ENCODE measurements at regions of chr6 and their contacts with region 1.

Region 1: GRCh38 chr6:70884074-70884983 is 72.5 kb downstream of the B3GAT2 start:
- DNase-seq: peak; percentile 73
- ATAC-seq: peak; percentile 90
- H3K4me3 Mint-ChIP-seq: no peak overlapping the region
- H3K27ac Mint-ChIP-seq: no peak overlapping the region
- H3K4me1 Mint-ChIP-seq: no peaks in the 10 kb centered on the region
- H3K27me3 Mint-ChIP-seq: peaks cover 7% of the 10 kb centered on the region

Region 2: DNA sequence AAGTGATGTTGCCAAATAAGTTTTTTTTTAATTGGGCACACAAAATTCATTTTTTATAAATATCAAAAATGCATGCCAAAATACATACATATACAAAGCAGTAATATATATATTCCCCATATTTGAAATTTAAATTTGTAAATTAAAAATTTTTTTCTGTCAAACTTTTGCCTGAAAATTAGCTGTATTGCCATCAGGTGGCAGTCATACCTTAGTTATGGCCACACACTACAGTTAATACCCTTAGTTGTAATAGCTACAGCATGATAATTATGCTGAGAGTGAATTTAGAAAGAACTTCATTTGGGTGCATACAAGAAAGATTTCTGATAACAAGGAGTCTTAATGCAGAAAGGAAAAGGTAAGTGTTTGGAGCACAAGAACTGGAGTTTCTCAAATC is 363.8 kb before region 1 on chr6:
- CTCF ChIA-PET with region 1: interaction called, 25 read pairs
- POLR2A ChIA-PET with region 1: no interaction called
- intact Hi-C with region 1: loop called (anchors 1 kb)
- DNase-seq: no peak
- ATAC-seq: no peak
- H3K4me3 Mint-ChIP-seq: no peak overlapping the region
- H3K27ac Mint-ChIP-seq: no peak overlapping the region
- H3K4me1 Mint-ChIP-seq: peaks cover 6% of the 10 kb centered on the region
- H3K27me3 Mint-ChIP-seq: no peaks in the 10 kb centered on the region

Region 3: GRCh38 chr6:70547313-70547712 is 337.0 kb before region 1 on chr6:
- CTCF ChIA-PET with region 1: interaction called, 6 read pairs
- POLR2A ChIA-PET with region 1: no interaction called
- intact Hi-C with region 1: loop called in 1 of 2 experiments (anchors 2 kb)
- DNase-seq: no peak
- ATAC-seq: no peak
- H3K4me3 Mint-ChIP-seq: no peak overlapping the region
- H3K27ac Mint-ChIP-seq: no peak overlapping the region
- H3K4me1 Mint-ChIP-seq: no peaks in the 10 kb centered on the region
- H3K27me3 Mint-ChIP-seq: no peaks in the 10 kb centered on the region

Region 4: GRCh38 chr6:70706491-70707123 is 177.7 kb before region 1 on chr6:
- CTCF ChIA-PET with region 1: interaction called, 61 read pairs
- POLR2A ChIA-PET with region 1: interaction called, 3 read pairs
- intact Hi-C with region 1: loop called (anchors 1 kb)
- DNase-seq: no peak
- ATAC-seq: no peak
- H3K4me3 Mint-ChIP-seq: no peak overlapping the region
- H3K27ac Mint-ChIP-seq: no peak overlapping the region
- H3K4me1 Mint-ChIP-seq: peaks cover 47% of the 10 kb centered on the region
- H3K27me3 Mint-ChIP-seq: no peaks in the 10 kb centered on the region

Region 5: GRCh38 chr6:70839286-70840266 is 44.8 kb before region 1 on chr6:
- CTCF ChIA-PET with region 1: interaction called, 13 read pairs
- POLR2A ChIA-PET with region 1: no interaction called
- intact Hi-C with region 1: no loop called
- DNase-seq: no peak
- ATAC-seq: peak; percentile 70
- H3K4me3 Mint-ChIP-seq: no peak overlapping the region
- H3K27ac Mint-ChIP-seq: peak overlapping the region; percentile 68
- H3K4me1 Mint-ChIP-seq: peaks cover 6% of the 10 kb centered on the region
- H3K27me3 Mint-ChIP-seq: no peaks in the 10 kb centered on the region

Region 6: GRCh38 chr6:70955441-70956190 is 71.3 kb after region 1 on chr6:
- CTCF ChIA-PET with region 1: interaction called, 3 read pairs
- POLR2A ChIA-PET with region 1: no interaction called
- intact Hi-C with region 1: loop called (anchors 1 to 5 kb)
- DNase-seq: peak; percentile 94
- ATAC-seq: peak; percentile 95
- H3K4me3 Mint-ChIP-seq: peak overlapping the region; percentile 64
- H3K27ac Mint-ChIP-seq: no peak overlapping the region
- H3K4me1 Mint-ChIP-seq: peaks cover 14% of the 10 kb centered on the region
- H3K27me3 Mint-ChIP-seq: peaks cover 52% of the 10 kb centered on the region

Region 7: GRCh38 chr6:71012866-71013469 is 128.6 kb after region 1 on chr6:
- CTCF ChIA-PET with region 1: interaction called, 3 read pairs
- POLR2A ChIA-PET with region 1: no interaction called
- intact Hi-C with region 1: loop called (anchors 5 kb)
- DNase-seq: peak; percentile 13
- ATAC-seq: peak; percentile 76
- H3K4me3 Mint-ChIP-seq: no peak overlapping the region
- H3K27ac Mint-ChIP-seq: no peak overlapping the region
- H3K4me1 Mint-ChIP-seq: no peaks in the 10 kb centered on the region
- H3K27me3 Mint-ChIP-seq: peaks cover 10% of the 10 kb centered on the region